ENCODE measurements at regions of chr6 and their contacts with region 1.

Region 1: DNA sequence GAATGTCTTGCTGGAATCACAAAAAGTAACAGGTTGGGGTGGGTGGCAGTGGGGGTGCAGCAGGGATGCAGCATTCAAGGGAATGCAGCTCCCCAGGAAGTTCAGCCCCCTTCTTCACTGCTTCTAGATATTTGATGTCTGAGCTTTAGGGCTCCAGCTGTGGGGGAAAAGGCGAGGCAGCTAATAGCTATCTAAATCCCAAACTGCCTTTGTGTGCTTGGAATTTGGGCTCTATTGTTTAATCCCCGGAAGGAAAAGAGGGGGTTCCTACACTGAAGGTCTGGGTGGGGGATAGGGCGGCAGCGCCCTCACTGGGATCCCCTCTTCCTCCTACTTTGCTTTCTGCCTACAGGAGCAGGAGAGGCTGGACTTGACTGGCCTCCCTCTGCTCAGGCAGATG is 116.5 kb downstream of the SOBP start:
- DNase-seq: no peak
- ATAC-seq: no peak
- H3K4me3 ChIP-seq: no peak overlapping the region
- H3K27ac ChIP-seq: no peak overlapping the region
- H3K4me1 ChIP-seq: peaks cover 1% of the 10 kb centered on the region; the same call in 1 of the 2 replicates
- H3K27me3 ChIP-seq: no peaks in the 10 kb centered on the region
- CTCF ChIP-seq: no peak

Region 2: GRCh38 chr6:107506145-107506544 is 100.3 kb before region 1 on chr6:
- CTCF ChIA-PET with region 1: no interaction called
- POLR2A ChIA-PET with region 1: interaction called, 20 read pairs
- in situ Hi-C with region 1: no loop called
- intact Hi-C with region 1: no loop called
- DNase-seq: no peak
- ATAC-seq: no peak
- H3K4me3 ChIP-seq: no peak overlapping the region
- H3K27ac ChIP-seq: no peak overlapping the region
- H3K4me1 ChIP-seq: 0 out of 2 replicates have a peak, but pooled peaks cover 5% of the 10 kb centered on the region
- H3K27me3 ChIP-seq: no peaks in the 10 kb centered on the region
- CTCF ChIP-seq: no peak

Region 3: GRCh38 chr6:107594736-107595135 is 11.7 kb before region 1 on chr6:
- CTCF ChIA-PET with region 1: no interaction called
- POLR2A ChIA-PET with region 1: no interaction called
- in situ Hi-C with region 1: no loop called
- intact Hi-C with region 1: no loop called
- DNase-seq: no peak
- ATAC-seq: no peak
- H3K4me3 ChIP-seq: no peak overlapping the region
- H3K27ac ChIP-seq: no peak overlapping the region
- H3K4me1 ChIP-seq: peaks cover 6% of the 10 kb centered on the region; the same call in 1 of the 2 replicates
- H3K27me3 ChIP-seq: 0 out of 2 replicates have a peak, but pooled peaks cover 3% of the 10 kb centered on the region
- CTCF ChIP-seq: no peak

Region 4: GRCh38 chr6:107641500-107641941 is 35.1 kb after region 1 on chr6:
- CTCF ChIA-PET with region 1: no interaction called
- POLR2A ChIA-PET with region 1: no interaction called
- in situ Hi-C with region 1: no loop called
- intact Hi-C with region 1: no loop called
- DNase-seq: no peak
- ATAC-seq: peak; percentile 56
- H3K4me3 ChIP-seq: no peak overlapping the region
- H3K27ac ChIP-seq: no peak overlapping the region
- H3K4me1 ChIP-seq: peaks cover 13% of the 10 kb centered on the region; the same call in 1 of the 2 replicates
- H3K27me3 ChIP-seq: no peaks in the 10 kb centered on the region
- CTCF ChIP-seq: no peak

Measured in Panc1 (cell line).